Activated naive CD4-positive, alpha-beta T cell treated with anti-CD3 and anti-CD28 coated beads for 36 hours (primary cell): ENCODE measurements at regions of chr15 and their contacts with region 1.

Region 1: GRCh38 chr15:52261498-52262242 is 33.9 kb downstream of the MYO5C start:
- DNase-seq: peak; percentile 89
- H3K4me3 Mint-ChIP-seq: peak overlapping the region; percentile 13
- H3K27ac Mint-ChIP-seq: peak overlapping the region; percentile 74
- H3K4me1 Mint-ChIP-seq: peaks cover 34% of the 10 kb centered on the region
- H3K27me3 Mint-ChIP-seq: no peaks in the 10 kb centered on the region

Region 2: DNA sequence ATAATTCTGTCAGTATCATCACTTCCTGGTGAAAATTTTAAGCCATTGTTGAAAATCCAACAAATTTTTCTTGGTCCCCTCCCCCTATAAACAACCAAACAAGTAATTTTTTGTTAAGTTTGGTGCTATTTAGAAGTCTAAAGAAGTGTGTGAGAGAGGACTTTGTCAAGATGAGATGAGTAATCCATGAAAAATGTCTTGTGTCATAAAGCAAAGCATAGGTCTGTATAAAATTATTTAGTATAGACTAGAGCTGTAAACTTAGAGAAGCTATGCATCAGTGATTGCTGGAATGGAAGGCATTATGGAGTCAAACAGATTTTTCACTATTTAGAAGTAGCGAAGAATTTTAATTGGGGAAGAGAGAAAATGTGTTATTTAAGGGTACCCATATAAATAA is 211.3 kb before region 1 on chr15:
- CTCF ChIA-PET with region 1: no interaction called
- intact Hi-C with region 1: no loop called
- DNase-seq: no peak
- H3K4me3 Mint-ChIP-seq: no peak overlapping the region
- H3K27ac Mint-ChIP-seq: no peak overlapping the region
- H3K4me1 Mint-ChIP-seq: peaks cover 15% of the 10 kb centered on the region
- H3K27me3 Mint-ChIP-seq: no peaks in the 10 kb centered on the region

Region 3: GRCh38 chr15:52234596-52235541 is 26.8 kb before region 1 on chr15:
- CTCF ChIA-PET with region 1: interaction called, 10 read pairs
- intact Hi-C with region 1: loop called (anchors 2 kb)
- DNase-seq: peak; percentile 69
- H3K4me3 Mint-ChIP-seq: peak overlapping the region; percentile 24
- H3K27ac Mint-ChIP-seq: peak overlapping the region; percentile 79
- H3K4me1 Mint-ChIP-seq: peaks cover 43% of the 10 kb centered on the region
- H3K27me3 Mint-ChIP-seq: no peaks in the 10 kb centered on the region

Region 4: DNA sequence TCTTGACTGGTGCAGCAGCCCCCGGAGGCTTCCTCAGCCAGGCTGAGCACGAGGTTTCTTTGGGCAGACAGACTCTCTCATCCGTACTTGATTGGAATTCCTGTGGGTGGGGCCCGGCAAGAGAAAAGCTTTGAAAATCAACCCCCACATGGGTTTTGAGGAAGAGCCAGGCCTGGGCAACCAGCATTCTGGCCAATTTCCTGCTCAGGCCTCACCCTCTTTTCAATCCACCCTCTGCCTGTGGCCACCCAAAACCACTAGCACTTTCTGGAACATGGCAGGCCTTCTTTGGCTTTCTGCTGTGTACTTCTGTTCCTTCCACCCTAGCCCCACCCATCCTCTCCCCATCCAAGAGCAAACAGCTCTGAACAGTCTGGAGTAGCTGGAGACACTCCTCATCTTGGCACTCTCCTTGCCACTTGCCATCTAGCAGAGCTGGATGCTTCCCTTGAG is 28.0 kb after region 1 on chr15:
- CTCF ChIA-PET with region 1: interaction called, 6 read pairs
- intact Hi-C with region 1: loop called (anchors 2 kb)
- DNase-seq: no peak
- H3K4me3 Mint-ChIP-seq: no peak overlapping the region
- H3K27ac Mint-ChIP-seq: no peak overlapping the region
- H3K4me1 Mint-ChIP-seq: no peaks in the 10 kb centered on the region
- H3K27me3 Mint-ChIP-seq: peaks cover 19% of the 10 kb centered on the region